CD8-positive, alpha-beta T cell (primary cell): ENCODE measurements at regions of chr10 and their contacts with region 1.

Region 1: DNA sequence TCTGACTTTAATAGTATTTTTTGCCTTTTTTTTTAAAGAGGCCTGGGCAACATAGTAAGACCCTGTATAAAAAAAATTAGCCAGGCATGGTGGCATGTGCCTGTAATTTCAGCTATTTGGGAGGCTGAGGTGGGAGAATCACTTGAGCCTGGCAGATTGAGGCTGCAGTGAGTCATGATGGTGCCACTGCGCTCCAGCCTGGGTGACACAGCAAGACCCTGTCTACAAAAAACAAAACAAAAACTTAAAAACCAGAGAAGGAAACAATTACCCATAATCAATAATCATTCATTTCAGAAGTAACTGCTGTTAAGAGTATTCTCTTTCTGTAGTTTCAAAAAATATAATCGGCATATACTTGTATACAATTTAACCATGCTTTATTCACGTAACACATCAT is 28.0 kb downstream of the VPS26A start:
- DNase-seq: no peak
- ATAC-seq: no peak
- H3K4me3 ChIP-seq: no peak overlapping the region
- H3K4me3 Mint-ChIP-seq: no peak overlapping the region
- H3K27ac ChIP-seq: no peak overlapping the region
- H3K27ac Mint-ChIP-seq: no peak overlapping the region
- H3K4me1 ChIP-seq: peaks cover 4% of the 10 kb centered on the region
- H3K4me1 Mint-ChIP-seq: peaks cover 20% of the 10 kb centered on the region
- H3K27me3 ChIP-seq: no peaks in the 10 kb centered on the region
- H3K27me3 Mint-ChIP-seq: no peaks in the 10 kb centered on the region
- CTCF ChIP-seq: no peak

Region 2: GRCh38 chr10:68192113-68192512 is 959.9 kb before region 1 on chr10:
- CTCF ChIA-PET with region 1: no interaction called
- POLR2A ChIA-PET with region 1: no interaction called
- intact Hi-C with region 1: loop called in 1 of 2 experiments (anchors 10 kb)
- DNase-seq: no peak
- ATAC-seq: no peak
- H3K4me3 ChIP-seq: no peak overlapping the region
- H3K4me3 Mint-ChIP-seq: no peak overlapping the region
- H3K27ac ChIP-seq: no peak overlapping the region
- H3K27ac Mint-ChIP-seq: no peak overlapping the region
- H3K4me1 ChIP-seq: no peaks in the 10 kb centered on the region
- H3K4me1 Mint-ChIP-seq: no peaks in the 10 kb centered on the region
- H3K27me3 ChIP-seq: no peaks in the 10 kb centered on the region
- H3K27me3 Mint-ChIP-seq: peaks cover 16% of the 10 kb centered on the region
- CTCF ChIP-seq: no peak